ENCODE measurements at regions of chr5 and their contacts with region 1.

Region 1: GRCh38 chr5:157476702-157477408 is 16.8 kb downstream of the NIPAL4 start:
- DNase-seq: peak; percentile 63
- H3K4me3 Mint-ChIP-seq: no peak overlapping the region
- H3K27ac Mint-ChIP-seq: no peak overlapping the region
- H3K4me1 Mint-ChIP-seq: peaks cover 8% of the 10 kb centered on the region
- H3K27me3 Mint-ChIP-seq: no peaks in the 10 kb centered on the region
- CTCF ChIP-seq: peak; percentile 84

Region 2: GRCh38 chr5:157148734-157149615 is 327.9 kb before region 1 on chr5:
- CTCF ChIA-PET with region 1: no interaction called
- intact Hi-C with region 1: loop called (anchors 1 kb)
- DNase-seq: peak; percentile 86
- H3K4me3 Mint-ChIP-seq: no peak overlapping the region
- H3K27ac Mint-ChIP-seq: peak overlapping the region; percentile 50
- H3K4me1 Mint-ChIP-seq: peaks cover 10% of the 10 kb centered on the region
- H3K27me3 Mint-ChIP-seq: no peaks in the 10 kb centered on the region
- CTCF ChIP-seq: peak; percentile 88

Region 3: GRCh38 chr5:157328277-157328912 is 148.5 kb before region 1 on chr5:
- CTCF ChIA-PET with region 1: interaction called, 20 read pairs
- intact Hi-C with region 1: loop called (anchors 1 kb)
- DNase-seq: peak; percentile 72
- H3K4me3 Mint-ChIP-seq: peak overlapping the region; percentile 19
- H3K27ac Mint-ChIP-seq: peak overlapping the region; percentile 29
- H3K4me1 Mint-ChIP-seq: peaks cover 30% of the 10 kb centered on the region
- H3K27me3 Mint-ChIP-seq: no peaks in the 10 kb centered on the region
- CTCF ChIP-seq: peak; percentile 89

Region 4: GRCh38 chr5:157366741-157367674 is 109.8 kb before region 1 on chr5:
- CTCF ChIA-PET with region 1: no interaction called
- intact Hi-C with region 1: loop called (anchors 1 kb)
- DNase-seq: no peak
- H3K4me3 Mint-ChIP-seq: no peak overlapping the region
- H3K27ac Mint-ChIP-seq: no peak overlapping the region
- H3K4me1 Mint-ChIP-seq: no peaks in the 10 kb centered on the region
- H3K27me3 Mint-ChIP-seq: no peaks in the 10 kb centered on the region
- CTCF ChIP-seq: peak; percentile 22

Region 5: GRCh38 chr5:157497875-157498611 is 21.2 kb after region 1 on chr5:
- CTCF ChIA-PET with region 1: no interaction called
- intact Hi-C with region 1: no loop called
- DNase-seq: no peak
- H3K4me3 Mint-ChIP-seq: no peak overlapping the region
- H3K27ac Mint-ChIP-seq: no peak overlapping the region
- H3K4me1 Mint-ChIP-seq: no peaks in the 10 kb centered on the region
- H3K27me3 Mint-ChIP-seq: no peaks in the 10 kb centered on the region
- CTCF ChIP-seq: no peak

Region 6: DNA sequence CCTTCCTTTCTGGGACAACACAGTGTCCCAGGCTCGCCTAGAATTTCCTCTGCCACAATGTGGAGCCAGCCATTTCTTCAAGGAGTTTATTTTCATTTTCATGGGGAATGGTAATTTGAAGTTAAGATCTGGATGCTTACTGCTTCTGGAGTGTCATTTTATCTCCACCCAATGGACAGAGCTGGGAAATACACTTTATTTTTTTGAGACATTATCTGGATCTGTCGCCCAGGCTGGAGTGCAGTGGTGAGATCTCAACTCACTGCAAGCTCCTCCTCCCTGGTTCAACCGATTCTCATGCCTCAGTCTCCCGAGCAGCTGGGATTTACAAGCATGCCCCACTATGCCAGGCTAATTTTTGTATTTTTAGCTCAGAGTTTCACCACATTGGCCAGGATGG is 241.7 kb after region 1 on chr5:
- CTCF ChIA-PET with region 1: no interaction called
- intact Hi-C with region 1: loop called (anchors 1 kb)
- DNase-seq: peak; percentile 27
- H3K4me3 Mint-ChIP-seq: no peak overlapping the region
- H3K27ac Mint-ChIP-seq: no peak overlapping the region
- H3K4me1 Mint-ChIP-seq: no peaks in the 10 kb centered on the region
- H3K27me3 Mint-ChIP-seq: no peaks in the 10 kb centered on the region
- CTCF ChIP-seq: no peak

Measured in Calu3 (cell line).